K562 (cell line): ENCODE measurements at regions of chr4 and their contacts with region 1.

Region 1: DNA sequence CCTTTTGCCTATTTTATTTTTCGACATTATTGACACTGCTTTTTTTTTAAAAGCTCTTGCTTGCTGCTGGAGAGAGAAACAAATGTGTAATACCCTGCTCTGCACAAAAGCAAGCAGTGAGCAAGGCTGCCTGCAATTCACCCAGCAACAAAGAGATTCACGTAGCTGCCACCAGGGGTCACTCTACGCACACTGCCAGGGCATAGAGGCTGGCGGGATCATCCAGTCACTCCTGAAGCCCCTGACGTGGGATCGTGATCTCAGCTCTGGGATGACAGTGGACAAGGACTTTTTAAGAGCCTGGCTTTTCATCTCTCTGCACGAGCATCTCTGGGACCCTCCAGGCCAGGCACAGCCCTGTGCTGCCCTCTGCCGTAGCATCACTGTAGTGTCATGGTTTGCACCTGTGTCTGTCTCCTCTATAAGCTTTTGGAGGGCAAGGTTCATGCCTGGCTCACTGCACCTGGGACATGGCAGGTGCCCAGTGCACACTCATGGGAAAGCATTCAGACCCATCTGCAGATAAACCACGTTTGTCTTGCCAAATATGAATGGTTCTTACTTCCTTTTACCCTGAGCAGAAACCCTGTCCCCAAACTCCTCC is 19.8 kb downstream of the C4orf50 start:
- DNase-seq: peak; percentile 63 to 78 (median 69)
- ATAC-seq: peak; percentile 93
- H3K4me3 ChIP-seq: no peak overlapping the region
- H3K27ac ChIP-seq: no peak overlapping the region
- H3K4me1 ChIP-seq: no peaks in the 10 kb centered on the region
- H3K27me3 ChIP-seq: peaks cover 0 to 7% of the 10 kb centered on the region in 2 experiments; a peak in 2 of 5 replicates
- CTCF ChIP-seq: peak; percentile 91 to 98 (median 94)
- EP300 ChIP-seq: no peak
- POLR2A ChIP-seq: no peak
- RAD21 ChIP-seq: peak; percentile 66 to 83

Region 2: DNA sequence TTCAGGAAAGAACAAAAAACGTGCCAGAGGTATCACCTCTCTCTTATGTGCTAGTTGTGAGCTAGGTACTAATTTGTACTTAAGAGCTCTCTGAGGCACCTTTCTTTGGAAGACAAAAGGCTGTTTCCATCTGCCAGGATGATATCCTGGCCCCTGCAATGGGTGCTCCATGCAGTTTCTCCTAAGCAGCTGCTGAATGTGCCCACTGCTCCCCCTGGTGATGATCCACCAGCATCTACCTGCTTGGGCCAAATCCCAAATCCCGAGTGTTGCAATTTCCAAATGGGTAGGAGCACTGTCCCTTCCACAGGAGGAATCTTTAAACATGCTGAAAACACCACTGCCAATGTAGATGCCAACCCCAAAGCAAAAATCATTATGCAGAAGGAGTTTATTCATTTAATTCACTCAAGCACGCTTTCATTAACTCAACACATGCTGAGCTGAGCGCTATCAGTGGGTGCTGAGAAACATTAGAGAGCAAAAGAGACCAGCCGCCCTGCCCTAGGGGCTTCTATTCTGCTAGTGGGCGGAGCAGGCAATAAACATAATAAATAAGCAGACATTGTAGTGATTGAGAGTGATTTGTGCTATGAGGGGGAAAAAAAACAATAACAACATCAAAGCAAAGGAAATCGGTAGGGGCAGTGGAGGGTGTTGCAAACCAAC is 89.4 kb after region 1 on chr4:
- CTCF ChIA-PET with region 1: interaction called, 15 read pairs
- POLR2A ChIA-PET with region 1: no interaction called
- in situ Hi-C with region 1: no loop called
- intact Hi-C with region 1: loop called (anchors 1 kb)
- DNase-seq: peak; percentile 15 to 44 (median 32)
- ATAC-seq: 0 out of 3 replicates have a peak, but pooled peaks have one; percentile 49
- H3K4me3 ChIP-seq: no peak overlapping the region
- H3K27ac ChIP-seq: no peak overlapping the region
- H3K4me1 ChIP-seq: no peaks in the 10 kb centered on the region
- H3K27me3 ChIP-seq: peaks cover 0 to 4% of the 10 kb centered on the region in 2 experiments; a peak in 1 of 5 replicates
- CTCF ChIP-seq: peak; percentile 48 to 66 (median 64); a peak in 5 of 6 replicates
- EP300 ChIP-seq: no peak
- POLR2A ChIP-seq: no peak
- RAD21 ChIP-seq: peak; percentile 29 to 55

Region 3: GRCh38 chr4:6250235-6250983 is 252.0 kb after region 1 on chr4:
- CTCF ChIA-PET with region 1: no interaction called
- POLR2A ChIA-PET with region 1: no interaction called
- in situ Hi-C with region 1: no loop called
- intact Hi-C with region 1: loop called (anchors 5 kb)
- DNase-seq: peak; percentile 61 to 68 (median 65)
- ATAC-seq: peak; percentile 78
- H3K4me3 ChIP-seq: no peak overlapping the region
- H3K27ac ChIP-seq: no peak overlapping the region
- H3K4me1 ChIP-seq: peaks cover 0 to 6% of the 10 kb centered on the region in 2 experiments; a peak in 1 of 5 replicates
- H3K27me3 ChIP-seq: peaks cover 0 to 5% of the 10 kb centered on the region in 2 experiments; a peak in 1 of 5 replicates
- CTCF ChIP-seq: peak; percentile 68 to 90 (median 75)
- EP300 ChIP-seq: no peak
- POLR2A ChIP-seq: no peak
- RAD21 ChIP-seq: peak; percentile 62 to 81

Region 4: GRCh38 chr4:7655511-7656243 is 1657.2 kb after region 1 on chr4:
- CTCF ChIA-PET with region 1: no interaction called
- POLR2A ChIA-PET with region 1: no interaction called
- in situ Hi-C with region 1: no loop called
- intact Hi-C with region 1: no loop called
- DNase-seq: peak; percentile 28 to 39 (median 36)
- ATAC-seq: peak; percentile 75
- H3K4me3 ChIP-seq: no peak overlapping the region
- H3K27ac ChIP-seq: no peak overlapping the region
- H3K4me1 ChIP-seq: peaks cover 0 to 6% of the 10 kb centered on the region in 2 experiments; a peak in 3 of 5 replicates
- H3K27me3 ChIP-seq: peaks cover 3 to 38% of the 10 kb centered on the region in 2 experiments; a peak in 3 of 5 replicates
- CTCF ChIP-seq: no peak
- EP300 ChIP-seq: no peak
- POLR2A ChIP-seq: no peak
- RAD21 ChIP-seq: no peak